Mammary epithelial cell (primary cell): ENCODE measurements at regions of chr11 and their contacts with region 1.

Region 1: DNA sequence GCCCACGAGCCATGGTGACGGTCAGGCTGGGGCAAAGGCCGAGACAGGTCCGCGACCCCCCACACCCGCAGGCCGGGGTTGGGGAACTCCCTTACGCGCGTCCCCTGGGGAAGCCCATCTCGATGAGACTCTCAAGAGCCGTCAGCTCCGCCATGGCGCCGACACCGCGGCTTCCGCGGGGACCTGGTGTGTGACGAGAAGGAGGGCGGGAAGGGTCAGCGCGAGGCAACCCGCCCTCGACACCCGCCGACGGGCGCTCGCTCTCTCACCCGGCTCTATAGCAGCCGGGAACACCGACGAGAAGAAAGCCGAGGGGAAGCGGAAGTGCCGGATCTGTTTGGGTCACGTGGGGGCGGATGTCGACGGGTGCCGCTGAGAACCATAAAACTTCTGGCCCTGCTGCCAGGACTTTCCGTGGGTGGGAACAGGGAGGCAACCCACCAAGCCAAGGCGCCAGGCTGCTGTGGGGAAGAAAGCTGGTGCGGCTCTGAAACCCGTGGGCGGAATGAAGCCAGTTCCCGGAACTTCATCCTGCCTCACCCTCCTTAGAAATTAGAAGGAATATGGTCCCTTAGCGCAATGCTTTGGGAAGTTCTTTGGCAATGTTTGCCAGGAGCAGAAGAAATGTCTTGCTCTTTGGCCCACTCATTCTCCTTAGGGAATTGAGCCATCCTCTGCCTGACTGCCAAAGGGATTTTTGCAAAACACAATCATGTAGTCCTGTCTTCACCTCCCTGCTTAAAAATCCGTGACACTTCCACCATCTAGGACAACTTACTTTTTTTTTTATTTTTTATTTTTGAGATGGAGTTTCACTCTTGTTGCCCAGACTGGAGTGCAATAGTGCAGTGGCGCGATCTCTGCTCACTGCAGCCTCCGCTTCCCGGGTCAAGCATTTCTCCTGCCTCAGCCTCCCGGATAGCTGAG is at the start of gene UBXN1:
- DNase-seq: peak; percentile 83
- H3K4me3 ChIP-seq: peak within 1 kb of the TSS; percentile 85 to 96 (median 86)
- H3K27ac ChIP-seq: peak within 1 kb of the TSS; percentile 77
- H3K4me1 ChIP-seq: peaks cover 15% of the 10 kb centered on the region
- H3K27me3 ChIP-seq: no peaks in the 10 kb centered on the region
- CTCF ChIP-seq: no peak
- total RNA-seq, gene UBXN1: 63.7 to 93.1 TPM

Region 2: GRCh38 chr11:62694455-62695167 is 15.6 kb after region 1 on chr11:
- CTCF ChIA-PET with region 1: interaction called, 4 read pairs
- dilution Hi-C with region 1: no loop called
- in situ Hi-C with region 1: no loop called
- intact Hi-C with region 1: loop called (anchors 2 kb)
- DNase-seq: peak; percentile 52
- H3K4me3 ChIP-seq: no peak overlapping the region
- H3K27ac ChIP-seq: no peak overlapping the region
- H3K4me1 ChIP-seq: no peaks in the 10 kb centered on the region
- H3K27me3 ChIP-seq: no peaks in the 10 kb centered on the region
- CTCF ChIP-seq: peak; percentile 79 to 87

Region 3: DNA sequence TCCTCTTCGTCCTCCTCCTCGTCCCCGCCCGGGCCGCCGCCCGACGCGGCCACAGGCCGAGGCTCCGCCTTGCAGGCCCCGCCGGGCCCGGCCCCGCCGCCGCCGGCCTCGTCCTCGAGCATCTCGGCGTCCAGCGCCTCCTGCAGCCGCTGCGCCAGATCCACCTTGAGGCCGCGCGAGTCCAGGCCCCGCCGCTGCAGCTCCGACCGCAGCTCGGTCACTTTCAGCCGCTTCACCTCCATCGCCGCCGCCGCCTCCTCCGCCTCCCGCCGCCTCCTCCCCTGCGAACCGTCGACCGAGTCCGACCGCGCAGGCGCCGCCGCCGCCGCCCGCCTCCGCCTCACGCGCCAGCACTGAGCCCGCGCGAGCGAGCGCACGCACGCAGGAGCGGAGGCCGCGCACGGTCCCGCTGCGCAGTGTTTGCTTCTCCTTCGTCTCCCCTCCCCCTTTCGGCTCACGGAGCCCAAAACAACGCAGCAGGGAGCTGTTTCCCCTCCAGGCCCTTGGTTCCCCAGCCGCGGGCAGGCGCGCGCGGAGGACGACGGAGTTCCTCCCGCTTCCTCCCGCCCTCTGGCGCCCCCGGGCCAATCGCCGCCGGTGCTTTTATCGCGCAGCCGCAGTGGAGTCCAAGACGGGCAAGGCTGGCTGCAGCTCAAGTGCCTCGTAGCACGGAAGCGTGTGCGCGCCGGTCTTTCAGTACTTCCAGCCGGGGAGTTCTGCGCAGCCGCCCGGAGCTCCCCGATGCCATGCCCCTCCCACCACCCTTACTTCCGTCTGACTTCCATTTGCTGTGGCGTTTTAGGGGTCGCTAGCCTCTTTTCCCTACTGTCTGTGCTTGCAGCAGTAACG is 48.1 kb after region 1 on chr11 and contains the start of gene HNRNPUL2:
- CTCF ChIA-PET with region 1: no interaction called
- dilution Hi-C with region 1: no loop called
- in situ Hi-C with region 1: no loop called
- intact Hi-C with region 1: loop called (anchors 2 kb)
- DNase-seq: peak; percentile 99
- H3K4me3 ChIP-seq: peak within 1 kb of the TSS; percentile 89 to 96 (median 90)
- H3K27ac ChIP-seq: peak within 1 kb of the TSS; percentile 82
- H3K4me1 ChIP-seq: peaks cover 4% of the 10 kb centered on the region
- H3K27me3 ChIP-seq: no peaks in the 10 kb centered on the region
- CTCF ChIP-seq: no peak
- total RNA-seq, gene HNRNPUL2: 7.7 to 50.4 TPM

Region 4: GRCh38 chr11:62771144-62772021 is 92.3 kb after region 1 on chr11 and contains the start of gene TAF6L:
- CTCF ChIA-PET with region 1: no interaction called
- dilution Hi-C with region 1: loop called (anchors 5 kb)
- in situ Hi-C with region 1: no loop called
- intact Hi-C with region 1: loop called (anchors 1 kb)
- DNase-seq: peak; percentile 96
- H3K4me3 ChIP-seq: peak within 1 kb of the TSS; percentile 33 to 93 (median 55)
- H3K27ac ChIP-seq: peak within 1 kb of the TSS; percentile 53
- H3K4me1 ChIP-seq: peaks cover 16% of the 10 kb centered on the region
- H3K27me3 ChIP-seq: no peaks in the 10 kb centered on the region
- CTCF ChIP-seq: no peak
- total RNA-seq, gene TAF6L: 16.3 to 22.0 TPM

Region 5: DNA sequence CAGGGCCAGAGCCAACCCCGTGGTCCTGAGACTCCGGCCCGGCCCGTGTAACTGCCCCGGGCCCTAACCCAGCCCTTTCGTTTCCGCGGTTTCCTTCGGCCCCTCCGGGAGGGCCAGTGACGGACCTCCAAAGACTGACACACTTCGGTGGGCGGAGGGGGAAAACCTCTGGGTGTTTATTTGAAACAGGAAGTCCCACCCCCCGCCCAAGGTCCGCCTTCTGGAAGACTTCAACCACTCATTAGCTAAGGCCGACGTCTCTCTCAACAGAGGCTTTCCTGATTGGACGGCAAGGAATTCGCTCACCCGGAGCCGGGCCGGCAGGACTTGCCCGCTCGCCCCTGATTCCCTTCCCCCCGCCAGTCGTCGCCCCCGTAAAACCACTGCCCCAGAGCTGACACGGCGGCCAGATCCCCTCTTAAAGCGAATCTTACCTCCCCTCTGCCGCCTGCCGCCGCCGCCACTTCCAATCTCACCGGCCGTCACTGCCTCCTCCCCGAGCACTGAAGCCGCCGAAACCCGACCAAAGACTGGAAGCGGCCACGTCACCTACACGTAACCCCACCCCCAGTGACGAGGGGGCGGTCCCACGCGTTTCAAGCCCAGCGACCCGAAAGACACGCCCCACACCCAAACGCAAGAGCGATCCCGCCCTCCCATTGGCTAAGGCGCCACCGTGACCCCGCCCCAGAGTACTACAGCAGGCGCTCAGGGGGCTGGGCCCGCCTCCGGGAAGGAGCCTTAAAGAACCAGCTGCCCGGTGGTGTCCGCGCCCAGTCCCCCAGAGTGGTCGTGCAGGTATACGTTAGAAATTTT is 152.7 kb after region 1 on chr11 and contains the start of gene STX5:
- CTCF ChIA-PET with region 1: no interaction called
- dilution Hi-C with region 1: no loop called
- in situ Hi-C with region 1: no loop called
- intact Hi-C with region 1: loop called (anchors 2 kb)
- DNase-seq: peak; percentile 97
- H3K4me3 ChIP-seq: peak within 1 kb of the TSS; percentile 59 to 84 (median 75)
- H3K27ac ChIP-seq: peak within 1 kb of the TSS; percentile 87
- H3K4me1 ChIP-seq: peaks cover 19% of the 10 kb centered on the region
- H3K27me3 ChIP-seq: no peaks in the 10 kb centered on the region
- CTCF ChIP-seq: no peak
- total RNA-seq, gene STX5: 26.7 to 44.1 TPM

Region 6: DNA sequence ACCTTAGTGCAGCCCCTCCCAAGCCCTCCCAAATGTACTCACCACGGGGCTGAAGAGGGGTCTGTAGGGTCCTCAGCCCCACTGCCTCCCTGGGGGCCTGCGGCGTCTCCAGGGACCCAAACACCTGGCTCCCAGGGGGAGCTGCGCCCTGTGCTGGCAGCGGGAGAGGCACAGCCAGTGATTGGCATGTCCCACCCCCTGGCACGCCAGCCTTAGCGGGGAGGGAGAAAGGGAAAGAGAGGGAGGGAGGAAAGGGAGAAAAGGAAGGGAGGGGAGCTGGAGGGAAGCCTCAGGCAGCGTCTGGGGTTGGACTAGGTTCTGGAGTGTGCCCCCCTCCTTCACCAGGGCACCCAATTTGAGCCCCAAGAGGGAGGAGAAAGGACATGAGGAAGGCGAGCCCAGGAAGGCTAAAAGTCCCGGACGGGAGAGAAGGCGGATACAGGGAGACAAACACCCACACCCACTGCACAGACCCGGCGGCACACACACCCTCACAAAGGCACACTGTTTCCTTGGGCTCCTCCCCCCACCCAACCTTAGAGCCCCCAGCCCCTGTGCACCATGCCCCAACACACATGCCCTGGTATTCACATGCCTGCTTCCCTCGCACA is 242.2 kb after region 1 on chr11 and contains the start of gene CHRM1:
- CTCF ChIA-PET with region 1: no interaction called
- dilution Hi-C with region 1: no loop called
- in situ Hi-C with region 1: no loop called
- intact Hi-C with region 1: no loop called
- DNase-seq: no peak
- H3K4me3 ChIP-seq: no peak within 1 kb of the TSS
- H3K27ac ChIP-seq: no peak within 1 kb of the TSS
- H3K4me1 ChIP-seq: peaks cover 16% of the 10 kb centered on the region
- H3K27me3 ChIP-seq: peaks cover 25% of the 10 kb centered on the region
- CTCF ChIP-seq: no peak
- total RNA-seq, gene CHRM1: not detected